ENCODE measurements at regions of chr22 and their contacts with region 1.

Region 1: DNA sequence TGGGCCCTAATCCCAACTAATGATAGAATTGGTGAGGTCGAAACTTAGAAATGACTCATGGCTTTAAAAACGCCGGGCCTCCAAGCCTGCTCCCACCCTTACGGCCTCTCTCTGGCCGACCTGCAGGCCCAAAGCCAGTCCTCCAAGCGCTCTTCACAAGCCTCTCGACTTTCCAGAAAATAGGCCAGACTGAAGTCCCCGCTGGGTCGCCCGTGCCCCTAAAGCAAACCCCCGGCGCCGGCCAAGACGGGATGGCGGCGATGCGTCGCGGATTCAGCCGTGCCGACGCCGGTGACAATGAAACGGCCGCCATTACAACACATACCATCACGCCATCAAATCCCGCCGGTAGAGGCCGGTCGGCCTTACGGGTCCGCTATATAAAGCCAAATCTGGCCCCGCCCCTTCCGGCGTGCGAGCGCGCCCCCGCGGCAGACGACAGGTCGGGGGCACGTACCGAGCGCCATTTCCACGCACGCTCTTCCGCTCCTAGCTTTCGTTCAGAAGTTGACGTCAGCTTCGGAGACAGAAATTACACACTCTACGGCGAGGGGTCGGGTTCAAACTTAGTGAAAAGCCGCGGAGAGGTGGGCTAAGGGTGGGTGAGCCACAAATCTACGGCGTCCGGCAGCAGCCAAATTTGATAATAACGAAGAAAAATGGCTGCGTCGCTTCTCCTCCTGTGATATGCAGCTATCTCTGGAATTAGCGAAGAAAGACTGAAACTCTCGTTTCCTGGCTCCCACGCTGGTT is at the start of gene RPL3:
- DNase-seq: peak; percentile 99
- ATAC-seq: peak; percentile 81
- H3K4me3 ChIP-seq: peak within 1 kb of the TSS; percentile 76
- H3K27ac ChIP-seq: peak within 1 kb of the TSS; percentile 85
- H3K4me1 ChIP-seq: peaks cover 16% of the 10 kb centered on the region
- H3K27me3 ChIP-seq: no peaks in the 10 kb centered on the region
- CTCF ChIP-seq: no peak
- POLR2A ChIP-seq: peak; percentile 100
- RAD21 ChIP-seq: no peak
- total RNA-seq, gene RPL3: 2,871 and 3,750 TPM in 2 replicates

Region 2: GRCh38 chr22:38972558-38972957 is 346.9 kb before region 1 on chr22:
- CTCF ChIA-PET with region 1: no interaction called
- POLR2A ChIA-PET with region 1: interaction called, 17 read pairs
- dilution Hi-C with region 1: no loop called
- in situ Hi-C with region 1: no loop called
- intact Hi-C with region 1: no loop called
- DNase-seq: no peak
- ATAC-seq: no peak
- H3K4me3 ChIP-seq: no peak overlapping the region
- H3K27ac ChIP-seq: no peak overlapping the region
- H3K4me1 ChIP-seq: no peaks in the 10 kb centered on the region
- H3K27me3 ChIP-seq: peaks cover 42% of the 10 kb centered on the region
- CTCF ChIP-seq: no peak
- POLR2A ChIP-seq: no peak
- RAD21 ChIP-seq: no peak

Region 3: DNA sequence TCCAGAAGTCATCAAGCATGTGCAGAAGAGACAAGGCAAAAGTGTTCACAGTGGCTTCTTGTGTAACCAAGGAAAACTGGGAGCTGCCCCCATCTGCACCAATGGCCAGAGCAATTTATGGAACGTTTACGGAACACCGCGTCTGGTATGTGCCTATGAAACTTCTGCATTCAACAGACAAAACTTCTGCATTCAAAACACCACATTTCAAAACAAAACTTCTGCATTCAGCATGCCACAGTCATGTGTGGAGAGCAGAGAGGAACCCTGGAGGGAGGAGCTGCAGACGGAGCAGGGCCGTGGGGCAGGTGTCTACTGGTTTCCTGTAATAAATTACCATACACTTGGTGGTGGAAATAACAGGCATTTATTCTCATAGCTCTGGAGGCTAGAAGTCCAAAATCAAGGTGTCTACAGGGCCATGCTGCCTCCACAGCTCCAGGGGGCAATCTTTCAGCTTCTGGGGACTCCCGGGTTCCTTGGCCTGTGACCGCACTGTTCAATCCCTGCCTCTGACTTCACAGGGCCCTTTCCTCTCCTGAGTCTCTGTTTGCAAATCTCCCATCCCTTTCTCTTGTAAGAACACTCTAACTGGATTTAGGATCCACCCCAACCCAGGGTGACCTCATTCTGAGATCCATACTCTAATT is 32.2 kb before region 1 on chr22:
- CTCF ChIA-PET with region 1: no interaction called
- POLR2A ChIA-PET with region 1: interaction called, 11 read pairs
- dilution Hi-C with region 1: no loop called
- in situ Hi-C with region 1: no loop called
- intact Hi-C with region 1: no loop called
- DNase-seq: no peak
- ATAC-seq: peak; percentile 22
- H3K4me3 ChIP-seq: no peak overlapping the region
- H3K27ac ChIP-seq: no peak overlapping the region
- H3K4me1 ChIP-seq: peaks cover 28% of the 10 kb centered on the region
- H3K27me3 ChIP-seq: no peaks in the 10 kb centered on the region; the same call in 1 of the 2 replicates
- CTCF ChIP-seq: no peak
- POLR2A ChIP-seq: no peak
- RAD21 ChIP-seq: no peak

Region 4: DNA sequence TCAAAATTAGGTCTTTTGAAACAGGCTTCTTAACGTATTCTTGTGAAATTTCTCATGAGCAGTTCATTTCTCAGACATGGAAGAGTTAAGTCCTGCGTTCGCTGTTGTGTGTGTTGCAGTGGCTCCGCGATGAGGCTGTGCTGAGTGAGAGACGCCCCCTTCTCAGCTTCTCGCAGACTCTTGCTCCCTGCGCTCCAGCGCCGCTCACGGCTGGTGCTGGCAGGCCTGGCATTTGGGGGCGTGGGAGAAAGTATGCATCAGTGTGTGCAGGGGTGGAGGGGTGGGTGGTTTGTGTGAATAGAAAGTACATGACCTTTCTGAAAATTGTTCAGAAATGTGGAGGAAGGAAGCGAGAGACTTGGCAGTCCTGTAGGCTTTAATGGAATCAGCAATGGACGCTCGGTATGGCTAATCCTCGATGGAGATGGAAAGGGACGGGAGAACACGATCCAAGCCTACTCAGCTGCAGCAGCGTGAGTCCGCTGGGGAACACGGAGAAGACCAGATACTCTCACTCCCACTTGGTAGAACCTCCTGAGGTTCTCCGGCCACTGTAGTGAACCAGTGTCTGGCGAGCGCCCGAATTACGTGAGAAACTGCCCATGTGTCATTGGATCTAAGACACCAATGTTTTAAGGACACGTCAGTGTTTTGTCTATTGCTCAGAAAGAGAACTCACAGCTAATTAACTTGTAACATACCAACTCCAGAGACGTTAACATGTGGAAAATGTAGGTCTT is 86.1 kb after region 1 on chr22:
- CTCF ChIA-PET with region 1: no interaction called
- POLR2A ChIA-PET with region 1: no interaction called
- dilution Hi-C with region 1: no loop called
- in situ Hi-C with region 1: no loop called
- intact Hi-C with region 1: loop called (anchors 1 kb)
- DNase-seq: peak; percentile 65
- ATAC-seq: peak; percentile 97
- H3K4me3 ChIP-seq: peak overlapping the region; percentile 25; the same call in 1 of the 2 replicates
- H3K27ac ChIP-seq: peak overlapping the region; percentile 46
- H3K4me1 ChIP-seq: peaks cover 10% of the 10 kb centered on the region
- H3K27me3 ChIP-seq: no peaks in the 10 kb centered on the region
- CTCF ChIP-seq: peak; percentile 33
- POLR2A ChIP-seq: no peak
- RAD21 ChIP-seq: no peak

Measured in IMR-90 (cell line).